ENCODE measurements at regions of chr9 and their contacts with region 1.

Region 1: DNA sequence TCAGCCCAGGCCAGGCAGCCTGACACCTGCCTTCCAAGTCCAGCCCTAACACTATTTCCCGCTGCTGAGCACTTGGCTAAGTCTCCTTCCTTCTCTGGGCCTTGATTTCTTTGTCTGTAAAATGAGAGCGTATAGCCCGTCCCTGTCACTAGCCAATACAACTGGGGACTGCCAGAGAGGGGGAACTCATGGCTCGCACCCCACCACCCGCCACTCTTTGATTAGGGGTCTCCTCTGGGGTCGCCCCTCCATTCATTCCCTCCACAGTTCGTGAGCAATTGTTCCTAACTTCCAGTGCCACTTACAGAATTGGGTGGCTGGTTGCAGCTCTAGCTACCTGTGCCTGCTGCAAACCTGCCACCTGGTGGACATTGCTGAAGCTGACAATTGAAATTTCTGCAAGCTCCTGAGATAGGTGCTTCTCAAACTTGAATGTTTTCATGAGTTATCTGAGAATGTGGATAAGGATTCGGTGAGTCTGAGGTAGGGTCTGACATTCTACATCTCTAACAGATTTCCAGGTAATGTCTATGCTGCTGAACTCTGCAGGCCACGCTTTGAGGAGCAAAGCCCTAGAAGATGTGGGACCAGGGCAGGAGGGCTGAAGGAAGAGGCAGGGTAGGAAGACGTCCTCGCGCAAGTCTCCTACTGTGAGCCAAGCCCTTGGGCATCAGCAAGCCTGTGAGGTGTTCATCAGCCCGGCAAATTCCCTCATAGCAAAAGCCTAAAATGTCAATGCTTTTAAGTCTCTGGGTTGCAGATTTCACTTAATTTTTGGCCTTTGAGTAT is 13.3 kb upstream of the RECK start:
- DNase-seq: peak; percentile 25 to 88 (median 72)

Region 2: DNA sequence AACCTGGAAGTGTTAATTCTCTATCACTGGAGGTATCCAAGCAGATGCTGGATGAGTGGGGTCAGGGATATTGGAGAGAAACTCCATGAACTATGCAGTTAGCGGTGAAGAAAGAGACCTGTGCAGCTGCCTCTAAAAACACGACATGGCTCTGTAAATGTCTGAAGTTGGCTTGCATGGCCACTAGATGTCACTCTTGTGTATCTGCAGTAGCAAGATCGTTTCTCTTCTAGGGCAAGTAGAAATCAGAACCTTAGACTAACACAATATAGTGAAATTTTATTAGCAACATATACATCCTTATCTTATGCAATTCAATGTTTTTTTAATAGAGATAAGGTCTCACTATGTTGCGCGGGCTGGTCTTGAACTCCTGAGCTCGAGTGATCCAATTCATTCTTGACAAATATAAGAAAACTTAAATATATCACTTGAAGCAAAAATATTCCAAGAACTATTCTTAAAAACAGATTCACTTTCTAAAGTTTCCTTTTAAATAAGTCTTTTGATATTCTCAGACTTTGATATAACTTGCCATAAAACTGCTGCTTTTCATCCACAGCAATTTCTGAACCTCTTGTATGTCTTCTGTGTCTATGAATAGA is 68.4 kb before region 1 on chr9:
- intact Hi-C with region 1: loop called (anchors 5 kb)
- DNase-seq: peak in 38 of 42 donors; percentile 16 to 84 (median 62)

Region 3: GRCh38 chr9:35981699-35982098 is 41.8 kb before region 1 on chr9:
- intact Hi-C with region 1: no loop called
- DNase-seq: no peak

Region 4: DNA sequence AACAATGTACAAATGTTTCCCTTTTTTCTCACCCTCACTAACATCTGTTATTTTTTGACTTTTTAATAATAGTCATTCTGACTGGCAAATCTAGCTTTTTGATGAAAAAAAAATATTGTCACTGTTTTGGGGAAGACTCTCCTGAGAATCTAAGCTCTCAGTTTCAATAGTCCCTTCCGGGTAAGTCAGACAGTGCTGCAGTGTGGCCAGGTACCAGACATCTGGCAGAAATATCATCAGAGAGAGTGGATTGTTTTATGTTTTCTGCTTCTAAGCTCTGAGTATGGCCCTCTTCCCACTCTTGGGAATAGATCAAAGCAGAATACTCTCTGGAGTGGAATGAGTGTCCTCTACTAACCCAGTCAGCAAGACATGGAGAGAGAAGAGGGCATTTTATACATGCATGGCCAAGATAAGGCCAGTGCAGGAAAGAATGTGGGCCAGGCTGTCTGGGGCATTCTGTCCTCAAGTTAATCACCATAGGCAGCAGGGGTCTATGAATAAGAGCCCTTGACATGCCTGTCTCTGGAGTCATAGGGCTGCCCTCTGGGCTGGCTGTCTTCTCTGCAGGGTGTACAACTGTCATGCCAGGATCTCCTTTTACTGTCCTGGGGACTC is 27.0 kb before region 1 on chr9:
- intact Hi-C with region 1: no loop called
- DNase-seq: no peak

Measured in head of caudate nucleus (tissue), 42 donors.